ENCODE measurements at regions of chr5 and their contacts with region 1.

Region 1: GRCh38 chr5:141564216-141564692 is 54.5 kb downstream of the DIAPH1 start:
- DNase-seq: peak; percentile 68
- CTCF ChIP-seq: peak; percentile 60

Region 2: GRCh38 chr5:140725799-140726471 is 838.3 kb before region 1 on chr5:
- CTCF ChIA-PET with region 1: no interaction called
- POLR2A ChIA-PET with region 1: no interaction called
- DNase-seq: peak; percentile 58
- CTCF ChIP-seq: no peak

Region 3: DNA sequence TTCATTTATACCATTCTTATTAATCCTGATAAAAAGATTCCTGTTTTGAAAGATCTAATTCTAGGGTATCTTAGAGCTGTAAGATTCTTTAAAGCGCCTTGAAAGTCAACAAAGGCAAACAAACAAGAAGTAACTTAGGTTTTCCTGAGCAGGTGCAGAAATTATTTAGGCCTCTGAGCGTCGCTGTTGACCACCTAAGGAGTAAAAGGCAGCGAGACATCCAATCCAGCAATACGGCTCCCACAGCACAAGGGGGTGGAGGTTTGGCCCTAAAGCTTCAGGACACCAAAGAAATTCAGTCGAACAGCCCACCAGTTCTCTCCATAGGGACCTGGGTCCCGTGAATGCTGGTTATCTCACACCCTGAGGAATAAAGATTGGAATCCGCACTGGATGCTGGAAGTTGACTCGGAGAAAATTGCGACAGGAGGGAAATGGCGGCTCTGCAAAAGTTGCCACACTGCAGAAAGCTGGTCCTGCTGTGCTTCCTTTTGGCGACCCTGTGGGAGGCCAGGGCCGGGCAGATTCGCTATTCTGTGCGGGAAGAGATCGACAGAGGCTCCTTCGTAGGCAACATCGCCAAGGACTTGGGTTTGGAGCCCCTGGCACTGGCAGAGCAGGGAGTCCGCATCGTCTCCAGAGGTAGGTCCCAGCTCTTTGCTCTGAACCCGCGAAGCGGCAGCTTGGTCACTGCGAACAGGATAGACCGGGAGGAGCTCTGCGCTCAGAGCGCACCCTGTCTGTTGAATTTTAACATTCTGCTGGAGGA is 225.5 kb before region 1 on chr5 and contains the start of gene PCDHGA2:
- CTCF ChIA-PET with region 1: interaction called, 15 read pairs
- POLR2A ChIA-PET with region 1: no interaction called
- DNase-seq: peak; percentile 47
- CTCF ChIP-seq: peak; percentile 35

Region 4: DNA sequence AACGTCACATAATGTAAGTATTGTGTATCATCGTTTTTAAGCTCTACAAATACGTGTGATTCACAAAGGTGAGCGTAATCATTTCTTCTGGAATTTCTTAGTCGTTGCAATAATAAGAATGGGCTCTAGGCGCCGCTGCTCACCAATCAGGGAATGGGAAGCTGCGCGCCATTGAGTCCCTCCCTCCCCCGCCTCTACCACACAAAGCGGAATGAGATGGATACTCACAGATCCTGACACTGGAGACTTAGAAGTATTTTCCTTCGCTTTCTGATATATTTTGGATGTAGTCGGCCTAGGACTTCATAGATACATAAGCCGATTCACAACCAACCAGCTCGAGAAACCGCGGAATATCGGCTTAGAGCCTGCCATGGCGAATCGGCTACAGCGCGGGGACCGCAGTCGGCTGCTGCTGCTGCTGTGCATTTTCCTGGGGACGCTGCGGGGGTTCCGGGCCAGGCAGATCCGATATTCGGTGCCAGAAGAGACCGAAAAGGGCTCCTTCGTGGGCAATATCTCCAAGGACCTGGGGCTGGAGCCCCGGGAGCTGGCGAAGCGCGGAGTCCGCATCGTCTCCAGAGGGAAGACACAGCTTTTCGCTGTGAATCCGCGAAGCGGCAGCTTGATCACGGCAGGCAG is 143.3 kb before region 1 on chr5 and contains the start of gene PCDHGA11:
- CTCF ChIA-PET with region 1: interaction called, 180 read pairs
- POLR2A ChIA-PET with region 1: no interaction called
- DNase-seq: peak; percentile 69
- CTCF ChIP-seq: peak; percentile 71

Region 5: GRCh38 chr5:141512390-141512910 is 51.8 kb before region 1 on chr5:
- CTCF ChIA-PET with region 1: interaction called, 33 read pairs
- POLR2A ChIA-PET with region 1: no interaction called
- DNase-seq: peak; percentile 85
- CTCF ChIP-seq: peak; percentile 79

Region 6: GRCh38 chr5:141532726-141533125 is 31.5 kb before region 1 on chr5:
- CTCF ChIA-PET with region 1: interaction called, 15 read pairs
- POLR2A ChIA-PET with region 1: no interaction called
- DNase-seq: no peak
- CTCF ChIP-seq: no peak

Region 7: DNA sequence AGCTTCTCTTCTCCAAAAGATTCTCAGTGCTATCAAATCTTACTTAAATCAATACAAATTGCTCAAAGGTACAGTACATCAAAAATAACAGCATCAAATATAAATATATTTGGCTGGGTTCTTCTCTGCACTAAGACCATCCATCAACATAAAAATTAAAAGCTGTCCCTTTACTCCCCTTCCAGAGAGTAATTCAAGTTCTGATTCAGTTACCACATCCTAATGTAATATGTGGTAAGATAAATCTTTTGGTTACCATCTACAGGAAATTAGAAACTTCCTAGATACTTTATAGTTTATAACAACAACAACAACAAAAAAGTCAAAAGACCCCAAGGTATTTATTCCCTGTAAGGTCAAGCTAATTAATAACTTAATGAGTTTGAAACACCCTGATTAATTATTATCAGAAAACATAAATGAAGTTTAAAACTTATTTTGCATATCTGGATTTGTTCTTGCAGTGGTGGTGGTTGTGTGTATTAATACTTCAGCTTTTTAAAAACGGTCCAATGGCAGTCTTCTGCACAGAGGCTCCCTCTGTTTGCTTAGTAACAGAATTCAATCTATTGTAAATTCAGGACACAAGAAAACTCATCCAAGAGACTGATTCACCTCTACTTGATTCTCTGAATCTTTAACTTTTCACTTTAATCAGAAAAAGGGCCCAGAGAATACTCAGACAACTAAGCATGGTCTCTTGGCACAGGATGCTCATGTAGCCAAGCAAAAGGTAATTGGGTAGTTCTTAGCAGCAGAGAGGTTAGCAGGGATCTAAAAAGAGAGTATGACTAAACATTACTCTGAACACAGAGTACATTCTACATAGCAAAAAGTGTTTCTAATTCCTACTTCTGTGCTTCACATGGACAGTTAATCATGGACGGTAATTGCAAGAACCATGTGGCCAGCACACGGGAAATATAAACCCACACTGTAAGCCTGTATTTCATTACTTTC is 34.4 kb after region 1 on chr5:
- CTCF ChIA-PET with region 1: interaction called, 30 read pairs
- POLR2A ChIA-PET with region 1: no interaction called
- DNase-seq: no peak
- CTCF ChIP-seq: no peak

Region 8: DNA sequence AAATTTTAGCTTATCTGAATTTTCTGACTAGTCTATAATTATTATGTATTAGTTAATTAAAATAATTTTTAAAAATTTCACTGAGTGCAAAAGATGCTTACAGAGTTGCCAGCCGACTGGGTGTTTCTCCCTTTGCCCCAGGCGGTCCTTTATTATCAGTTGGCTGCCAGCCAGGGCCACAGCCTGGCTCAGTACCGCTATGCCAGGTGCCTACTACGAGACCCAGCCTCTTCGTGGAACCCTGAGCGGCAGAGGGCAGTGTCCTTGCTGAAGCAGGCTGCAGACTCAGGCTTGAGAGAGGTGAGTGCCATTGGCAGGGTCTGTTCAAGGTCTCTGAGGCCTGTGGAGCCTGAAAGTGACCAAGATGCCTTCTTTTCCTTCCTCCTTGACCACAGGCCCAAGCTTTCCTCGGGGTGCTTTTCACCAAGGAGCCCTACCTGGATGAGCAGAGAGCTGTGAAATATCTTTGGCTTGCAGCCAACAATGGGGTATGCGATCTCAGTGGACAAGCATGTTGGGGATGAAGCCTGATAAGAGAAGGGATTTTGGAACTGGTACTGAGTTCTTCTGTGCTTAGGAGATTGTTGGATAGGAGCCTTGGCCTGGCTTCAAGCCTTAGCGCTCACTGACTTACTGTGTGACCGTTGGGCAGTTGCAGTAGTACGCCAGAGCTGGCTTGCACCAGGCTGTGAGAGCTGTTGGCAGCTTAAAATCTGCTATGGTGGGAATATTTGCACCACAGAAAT is 370.0 kb after region 1 on chr5:
- CTCF ChIA-PET with region 1: no interaction called
- POLR2A ChIA-PET with region 1: no interaction called
- DNase-seq: no peak
- CTCF ChIP-seq: no peak

Measured in GM10248 (cell line).